IMR-90 (cell line): ENCODE measurements at regions of chr1 and their contacts with region 1.

Region 1: DNA sequence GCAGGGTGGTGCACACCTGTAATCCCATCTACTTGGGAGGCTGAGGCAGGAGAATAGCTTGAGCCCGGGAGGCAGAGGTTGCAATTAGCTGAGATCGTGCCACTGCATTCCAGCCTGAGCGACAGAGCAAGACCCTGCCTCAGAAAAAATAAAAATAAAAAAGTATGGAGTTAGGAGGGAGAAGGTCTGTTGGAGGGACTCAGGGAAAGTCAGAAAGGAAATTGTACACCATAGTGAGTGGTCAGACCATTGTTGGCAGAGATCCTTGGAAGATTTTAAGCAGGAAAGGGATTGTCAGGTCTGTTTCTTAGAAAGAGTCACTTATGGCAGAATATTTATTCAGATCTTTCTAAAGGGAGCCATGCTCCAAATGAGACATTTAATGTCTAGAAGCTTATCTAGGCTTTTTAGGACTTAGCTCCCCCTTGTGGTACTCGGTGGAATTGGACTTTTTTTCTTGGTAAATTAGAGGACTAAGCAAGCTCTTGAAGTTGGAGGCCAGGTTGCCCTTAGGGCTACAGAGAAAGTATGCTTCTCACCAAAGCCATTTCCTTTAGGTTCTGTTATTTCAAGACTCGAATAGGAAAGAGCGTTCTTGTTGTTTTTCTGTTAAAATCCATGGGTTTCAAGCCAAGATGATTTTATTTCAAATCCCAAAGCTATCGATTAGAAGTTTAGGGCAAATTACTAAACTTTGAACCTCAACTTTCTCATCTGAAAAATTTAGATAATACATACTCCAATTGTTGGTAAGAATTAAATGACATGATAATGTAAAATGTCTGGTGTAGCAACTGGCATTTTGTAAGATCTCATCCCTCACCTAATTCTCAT is 16.5 kb downstream of the MIA3 start:
- DNase-seq: peak; percentile 90
- ATAC-seq: peak; percentile 82
- H3K4me3 ChIP-seq: no peak overlapping the region
- H3K27ac ChIP-seq: no peak overlapping the region
- H3K4me1 ChIP-seq: peaks cover 7% of the 10 kb centered on the region; the same call in 1 of the 2 replicates
- H3K27me3 ChIP-seq: no peaks in the 10 kb centered on the region
- CTCF ChIP-seq: peak; percentile 90
- POLR2A ChIP-seq: no peak
- RAD21 ChIP-seq: peak; percentile 83

Region 2: GRCh38 chr1:221886743-221887413 is 747.5 kb before region 1 on chr1:
- CTCF ChIA-PET with region 1: no interaction called
- POLR2A ChIA-PET with region 1: no interaction called
- dilution Hi-C with region 1: no loop called
- in situ Hi-C with region 1: no loop called
- intact Hi-C with region 1: loop called (anchors 5 kb)
- DNase-seq: peak; percentile 88
- ATAC-seq: peak; percentile 97
- H3K4me3 ChIP-seq: no peak overlapping the region
- H3K27ac ChIP-seq: peak overlapping the region; percentile 2; the same call in 1 of the 2 replicates
- H3K4me1 ChIP-seq: peaks cover 8% of the 10 kb centered on the region
- H3K27me3 ChIP-seq: no peaks in the 10 kb centered on the region
- CTCF ChIP-seq: peak; percentile 12; the same call in 1 of the 2 replicates
- POLR2A ChIP-seq: no peak
- RAD21 ChIP-seq: peak; percentile 27